HCT116 (cell line): ENCODE measurements at regions of chr9 and their contacts with region 1.

Region 1: DNA sequence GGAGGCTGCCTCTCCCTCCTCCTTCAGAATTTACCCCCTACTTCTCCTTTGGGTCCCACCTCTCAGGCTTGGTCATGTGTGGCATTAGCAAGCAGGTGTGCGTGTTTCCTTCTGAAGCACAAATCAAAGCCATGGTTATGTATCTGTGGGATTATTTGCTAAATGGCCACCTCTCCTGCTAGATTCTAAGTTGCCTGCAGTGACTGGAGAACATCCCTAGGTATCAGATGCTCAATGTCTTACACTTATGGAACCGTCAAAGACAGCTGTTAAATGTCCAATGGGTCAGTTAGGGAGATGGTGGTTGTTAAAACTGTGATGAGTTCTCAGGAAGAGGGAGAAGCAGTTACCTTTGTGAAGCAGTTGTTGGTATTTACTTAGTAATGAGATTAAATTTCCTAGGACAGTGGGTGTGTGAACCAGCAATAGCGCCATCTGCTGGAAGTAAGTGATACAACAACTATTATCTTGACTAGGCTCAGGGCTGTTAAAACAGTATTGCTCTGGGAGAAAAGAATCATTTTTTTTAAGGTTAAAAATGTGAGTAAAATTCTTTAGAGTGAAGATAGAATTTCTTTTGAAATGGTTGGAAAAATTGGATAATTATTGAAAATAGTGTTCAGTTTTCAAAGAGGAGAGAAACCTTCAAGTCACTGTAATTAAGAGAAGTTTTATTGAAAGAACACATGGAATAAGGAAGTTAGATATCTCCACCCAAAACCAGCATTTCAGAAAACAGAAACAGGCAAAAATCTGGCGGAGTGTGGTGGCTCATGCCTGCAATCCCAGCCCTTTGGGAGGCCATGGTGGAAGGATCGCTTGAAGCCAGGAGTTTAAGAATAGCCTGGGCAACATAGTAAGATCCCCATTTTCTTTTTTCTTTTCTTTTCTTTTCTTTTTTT is 71.3 kb downstream of the TMC1 start:
- DNase-seq: no peak
- ATAC-seq: peak; percentile 88
- H3K4me3 ChIP-seq: no peak overlapping the region
- H3K27ac ChIP-seq: no peak overlapping the region
- H3K4me1 ChIP-seq: peaks cover 4 to 27% of the 10 kb centered on the region in 2 experiments; a peak in 3 of 4 replicates
- H3K27me3 ChIP-seq: no peaks in the 10 kb centered on the region
- CTCF ChIP-seq: peak; percentile 62 to 86 (median 75)
- POLR2A ChIP-seq: no peak
- RAD21 ChIP-seq: peak; percentile 91

Region 2: DNA sequence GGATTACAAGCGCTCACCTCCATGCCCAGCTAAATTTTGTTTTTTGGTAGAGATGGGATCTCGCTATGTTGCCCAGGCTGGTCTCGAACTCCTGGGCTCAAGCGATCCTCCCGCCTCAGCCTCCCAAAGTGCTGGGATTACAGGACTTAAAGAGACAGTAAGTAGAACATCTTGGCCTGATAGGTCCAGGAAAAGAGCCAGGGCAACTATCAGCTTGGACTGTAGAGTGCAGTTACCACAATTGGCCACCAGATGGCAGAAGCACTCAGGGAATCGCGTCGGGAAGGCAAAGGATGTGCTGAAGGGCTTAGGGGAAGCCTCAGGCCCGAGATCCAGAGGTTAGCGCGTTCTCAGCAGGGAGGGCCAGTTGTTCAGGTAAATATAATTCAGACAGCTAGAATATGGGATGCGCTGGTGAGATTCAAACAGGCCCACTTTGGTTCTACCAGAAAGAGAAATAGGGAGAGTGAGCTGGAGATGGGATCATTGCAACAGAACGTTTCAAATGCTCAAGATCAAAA is 553.8 kb before region 1 on chr9:
- CTCF ChIA-PET with region 1: no interaction called
- POLR2A ChIA-PET with region 1: no interaction called
- RAD21 ChIA-PET with region 1: no interaction called
- intact Hi-C with region 1: loop called (anchors 5 kb)
- DNase-seq: peak; percentile 83
- ATAC-seq: peak; percentile 96
- H3K4me3 ChIP-seq: no peak overlapping the region
- H3K27ac ChIP-seq: no peak overlapping the region
- H3K4me1 ChIP-seq: peaks cover 0 to 12% of the 10 kb centered on the region in 2 experiments; a peak in 2 of 4 replicates
- H3K27me3 ChIP-seq: no peaks in the 10 kb centered on the region
- CTCF ChIP-seq: peak; percentile 87 to 94 (median 88)
- POLR2A ChIP-seq: no peak
- RAD21 ChIP-seq: peak; percentile 99

Region 3: DNA sequence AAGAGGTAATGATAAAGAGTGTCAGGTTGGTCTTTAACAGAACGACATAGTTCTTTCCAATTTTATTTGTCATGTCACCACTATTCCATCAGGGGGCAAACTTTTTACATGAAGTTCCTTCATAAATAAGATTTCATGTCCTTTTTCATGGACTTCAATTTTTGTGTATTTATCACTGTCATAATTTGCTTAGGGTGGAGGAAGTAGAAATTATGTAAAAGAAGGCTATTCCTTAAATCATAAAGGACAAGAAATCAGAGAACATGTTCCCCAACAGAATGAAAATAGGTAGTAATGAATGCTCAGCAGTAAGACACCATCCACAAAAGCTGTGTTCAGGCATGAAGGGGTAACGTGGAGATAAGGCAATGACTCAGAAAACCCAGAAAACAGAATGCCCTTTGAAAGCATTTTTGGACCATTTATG is 300.5 kb before region 1 on chr9:
- CTCF ChIA-PET with region 1: interaction called, 5 read pairs
- POLR2A ChIA-PET with region 1: interaction called, 4 read pairs
- RAD21 ChIA-PET with region 1: no interaction called
- intact Hi-C with region 1: loop called (anchors 1 kb)
- DNase-seq: no peak
- ATAC-seq: peak; percentile 72
- H3K4me3 ChIP-seq: no peak overlapping the region
- H3K27ac ChIP-seq: no peak overlapping the region
- H3K4me1 ChIP-seq: peaks cover 0 to 20% of the 10 kb centered on the region in 2 experiments; a peak in 3 of 4 replicates
- H3K27me3 ChIP-seq: no peaks in the 10 kb centered on the region
- CTCF ChIP-seq: peak; percentile 41 to 72 (median 61); a peak in 4 of 6 replicates
- POLR2A ChIP-seq: no peak
- RAD21 ChIP-seq: peak; percentile 81

Region 4: GRCh38 chr9:72473474-72474261 is 119.1 kb before region 1 on chr9:
- CTCF ChIA-PET with region 1: no interaction called
- POLR2A ChIA-PET with region 1: no interaction called
- RAD21 ChIA-PET with region 1: no interaction called
- intact Hi-C with region 1: loop called (anchors 2 kb)
- DNase-seq: no peak
- ATAC-seq: no peak
- H3K4me3 ChIP-seq: no peak overlapping the region
- H3K27ac ChIP-seq: no peak overlapping the region
- H3K4me1 ChIP-seq: peaks cover 24 to 41% of the 10 kb centered on the region in 2 experiments
- H3K27me3 ChIP-seq: no peaks in the 10 kb centered on the region
- CTCF ChIP-seq: no peak
- POLR2A ChIP-seq: no peak
- RAD21 ChIP-seq: no peak

Region 5: DNA sequence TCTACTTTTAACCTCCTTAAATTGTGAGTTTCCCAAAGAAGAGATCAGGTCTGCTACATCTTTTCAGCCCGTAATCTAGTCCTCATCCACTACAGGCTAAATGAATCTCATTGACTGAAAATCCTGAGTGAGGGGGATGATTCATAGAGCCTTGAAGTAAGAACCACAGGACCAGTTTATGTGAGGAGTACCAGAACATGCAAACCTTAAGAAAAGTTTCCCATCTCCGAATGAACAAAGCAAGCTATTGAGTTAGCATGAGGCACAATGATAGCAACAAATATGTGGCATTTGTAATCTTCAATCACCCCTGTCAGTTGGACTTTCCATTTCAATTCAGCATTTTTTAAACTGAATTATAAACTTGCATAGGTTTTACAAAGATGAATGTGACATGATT is 163.1 kb after region 1 on chr9:
- CTCF ChIA-PET with region 1: no interaction called
- POLR2A ChIA-PET with region 1: no interaction called
- RAD21 ChIA-PET with region 1: no interaction called
- intact Hi-C with region 1: no loop called
- DNase-seq: no peak
- ATAC-seq: no peak
- H3K4me3 ChIP-seq: no peak overlapping the region
- H3K27ac ChIP-seq: no peak overlapping the region
- H3K4me1 ChIP-seq: no peaks in the 10 kb centered on the region
- H3K27me3 ChIP-seq: no peaks in the 10 kb centered on the region
- CTCF ChIP-seq: no peak
- POLR2A ChIP-seq: no peak
- RAD21 ChIP-seq: no peak

Region 6: GRCh38 chr9:72827950-72828731 is 235.4 kb after region 1 on chr9:
- CTCF ChIA-PET with region 1: no interaction called
- POLR2A ChIA-PET with region 1: no interaction called
- RAD21 ChIA-PET with region 1: no interaction called
- intact Hi-C with region 1: loop called (anchors 5 kb)
- DNase-seq: no peak
- ATAC-seq: peak; percentile 34; the same call in 1 of the 2 replicates
- H3K4me3 ChIP-seq: no peak overlapping the region
- H3K27ac ChIP-seq: no peak overlapping the region
- H3K4me1 ChIP-seq: peaks cover 5 to 10% of the 10 kb centered on the region in 2 experiments
- H3K27me3 ChIP-seq: no peaks in the 10 kb centered on the region
- CTCF ChIP-seq: no peak
- POLR2A ChIP-seq: no peak
- RAD21 ChIP-seq: no peak